Cardiac septum (tissue), 1 donor: ENCODE measurements at regions of chr12 and their contacts with region 1.

Region 1: GRCh38 chr12:4037747-4038312 is 164.6 kb upstream of the PARP11 start:
- DNase-seq: no peak

Region 2: GRCh38 chr12:3885277-3886094 is 152.3 kb before region 1 on chr12:
- intact Hi-C with region 1: loop called (anchors 5 kb)
- DNase-seq: no peak

Region 3: DNA sequence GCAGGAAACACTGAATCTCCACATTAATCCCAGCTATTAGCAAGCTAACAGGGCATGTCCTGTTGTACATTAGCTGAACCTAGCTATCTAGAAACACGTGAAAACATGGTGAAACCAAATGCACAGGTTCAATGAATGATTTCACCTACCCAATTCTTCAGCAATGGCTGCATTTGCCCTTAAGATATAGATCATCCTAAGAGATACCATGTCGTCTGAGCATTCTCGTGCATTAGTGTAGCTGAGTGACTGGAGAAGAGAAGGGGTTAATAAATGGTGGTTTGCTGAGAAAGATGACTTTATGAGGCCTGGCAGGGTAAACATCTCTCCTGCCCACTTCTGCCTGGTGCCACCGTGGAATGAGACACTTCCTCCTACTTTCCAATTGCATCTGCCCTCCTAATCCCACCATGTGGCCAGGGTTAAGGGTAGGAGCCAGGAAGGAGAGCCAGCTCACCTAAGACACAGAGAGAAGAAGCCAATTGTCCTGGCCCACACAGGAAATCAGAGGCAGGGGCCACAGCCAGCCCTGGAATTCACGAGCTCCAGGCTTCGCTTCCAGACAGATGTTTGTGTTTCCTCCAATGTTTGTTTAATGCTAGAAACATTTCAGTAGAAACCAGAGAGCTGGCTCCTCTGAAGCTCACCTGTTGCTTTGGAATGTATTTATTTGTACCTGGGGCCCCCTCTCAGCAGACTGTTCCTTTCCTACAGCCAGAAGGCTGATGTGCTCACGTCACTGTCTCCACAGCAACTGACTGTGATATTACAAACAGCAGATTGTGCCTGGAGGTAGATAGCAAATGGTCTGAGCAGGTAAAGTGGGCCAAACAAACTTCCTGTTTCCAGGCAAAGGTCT is 38.6 kb before region 1 on chr12:
- intact Hi-C with region 1: loop called (anchors 5 kb)
- DNase-seq: no peak

Region 4: DNA sequence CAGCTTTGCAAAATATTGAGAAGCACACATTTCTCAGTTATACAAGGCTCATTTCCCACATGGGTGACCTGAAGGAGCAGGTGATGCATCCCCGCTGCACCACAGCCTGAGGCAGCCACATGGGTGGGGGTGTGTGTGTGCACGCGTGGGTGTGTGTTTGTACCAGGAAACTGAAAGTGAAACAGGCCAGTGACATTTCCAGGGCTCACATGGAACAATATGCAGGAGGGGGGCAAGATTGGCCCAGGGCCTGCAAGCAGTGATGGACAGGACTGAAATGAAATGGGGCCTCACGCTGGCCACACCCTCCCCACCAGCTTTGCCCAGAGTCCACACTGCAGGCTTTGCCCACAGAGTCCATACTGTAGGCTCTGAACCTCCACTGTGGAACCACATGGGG is 10.4 kb before region 1 on chr12:
- intact Hi-C with region 1: no loop called
- DNase-seq: no peak

Region 5: DNA sequence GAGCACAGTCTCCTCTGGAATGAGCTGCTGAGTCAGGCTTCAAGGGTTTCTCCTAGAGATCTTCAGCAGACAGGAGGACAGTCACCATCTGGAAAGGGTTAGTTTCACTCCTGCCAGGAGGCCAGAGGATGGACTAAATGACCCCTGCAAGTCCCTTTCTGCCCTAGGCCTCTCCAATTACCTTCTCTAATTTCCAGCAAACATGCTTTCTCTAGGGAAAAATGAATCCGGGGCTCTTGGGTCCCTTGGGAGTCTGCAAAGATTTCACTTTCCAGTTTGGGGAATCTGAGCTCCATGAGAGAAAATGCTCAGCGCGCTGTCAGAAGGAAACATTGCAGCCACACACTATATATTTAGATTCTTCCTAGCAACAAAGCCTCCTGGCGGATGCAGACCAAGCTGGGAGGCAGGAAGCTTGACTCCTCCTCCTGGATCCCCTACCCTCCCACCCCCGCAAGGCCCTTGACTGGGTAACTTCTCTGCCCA is 51.3 kb after region 1 on chr12:
- intact Hi-C with region 1: no loop called
- DNase-seq: no peak